ENCODE measurements at regions of chr10 and their contacts with region 1.

Region 1: GRCh38 chr10:72567884-72568640 is 57.8 kb downstream of the MICU1 start:
- DNase-seq: no peak
- ATAC-seq: no peak
- H3K4me3 Mint-ChIP-seq: no peak overlapping the region
- H3K27ac Mint-ChIP-seq: no peak overlapping the region
- H3K4me1 Mint-ChIP-seq: peaks cover 17% of the 10 kb centered on the region
- H3K27me3 Mint-ChIP-seq: no peaks in the 10 kb centered on the region

Region 2: DNA sequence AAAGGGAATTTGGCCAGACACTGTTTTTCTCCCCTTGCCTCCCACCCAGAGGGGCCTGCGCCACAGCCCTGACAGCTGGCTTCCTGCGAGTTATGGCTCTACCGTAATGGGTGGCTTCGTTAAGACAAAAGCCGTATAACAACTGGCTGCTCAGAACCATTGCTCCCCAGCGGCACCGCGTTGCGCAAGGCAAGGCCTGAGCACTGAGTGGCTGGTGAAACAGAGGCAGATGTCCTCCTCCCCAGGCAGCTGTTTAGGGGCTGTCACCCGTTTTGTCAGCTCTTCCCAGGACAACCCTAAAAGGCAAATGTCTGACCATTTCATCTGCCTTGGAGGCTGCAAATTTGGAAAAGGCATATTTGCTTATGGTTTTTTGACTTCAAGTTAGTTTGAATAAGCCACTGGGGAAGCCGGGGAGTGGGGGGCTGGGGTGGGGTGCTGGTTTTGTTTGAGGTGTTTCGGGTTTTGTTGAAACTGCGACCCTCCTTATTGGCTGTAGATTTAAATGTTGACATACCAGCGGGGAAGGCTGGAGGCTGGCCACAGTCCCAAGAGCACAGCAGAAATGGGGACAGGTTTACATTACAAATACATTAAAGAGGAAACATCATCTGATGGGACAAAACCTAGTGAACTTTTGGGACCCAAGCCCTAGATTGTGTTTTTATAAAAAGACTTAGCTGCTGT is 479.0 kb before region 1 on chr10:
- CTCF ChIA-PET with region 1: no interaction called
- POLR2A ChIA-PET with region 1: no interaction called
- intact Hi-C with region 1: loop called in 1 of 2 experiments (anchors 2 kb)
- DNase-seq: peak; percentile 79
- ATAC-seq: peak; percentile 50
- H3K4me3 Mint-ChIP-seq: peak overlapping the region; percentile 98
- H3K27ac Mint-ChIP-seq: peak overlapping the region; percentile 100
- H3K4me1 Mint-ChIP-seq: peaks cover 57% of the 10 kb centered on the region
- H3K27me3 Mint-ChIP-seq: no peaks in the 10 kb centered on the region

Region 3: GRCh38 chr10:72162978-72163377 is 405.1 kb before region 1 on chr10:
- CTCF ChIA-PET with region 1: no interaction called
- POLR2A ChIA-PET with region 1: no interaction called
- intact Hi-C with region 1: loop called in 1 of 2 experiments (anchors 5 kb)
- DNase-seq: peak; percentile 25
- ATAC-seq: peak; percentile 94
- H3K4me3 Mint-ChIP-seq: no peak overlapping the region
- H3K27ac Mint-ChIP-seq: peak overlapping the region; percentile 85
- H3K4me1 Mint-ChIP-seq: peaks cover 35% of the 10 kb centered on the region
- H3K27me3 Mint-ChIP-seq: no peaks in the 10 kb centered on the region

Region 4: DNA sequence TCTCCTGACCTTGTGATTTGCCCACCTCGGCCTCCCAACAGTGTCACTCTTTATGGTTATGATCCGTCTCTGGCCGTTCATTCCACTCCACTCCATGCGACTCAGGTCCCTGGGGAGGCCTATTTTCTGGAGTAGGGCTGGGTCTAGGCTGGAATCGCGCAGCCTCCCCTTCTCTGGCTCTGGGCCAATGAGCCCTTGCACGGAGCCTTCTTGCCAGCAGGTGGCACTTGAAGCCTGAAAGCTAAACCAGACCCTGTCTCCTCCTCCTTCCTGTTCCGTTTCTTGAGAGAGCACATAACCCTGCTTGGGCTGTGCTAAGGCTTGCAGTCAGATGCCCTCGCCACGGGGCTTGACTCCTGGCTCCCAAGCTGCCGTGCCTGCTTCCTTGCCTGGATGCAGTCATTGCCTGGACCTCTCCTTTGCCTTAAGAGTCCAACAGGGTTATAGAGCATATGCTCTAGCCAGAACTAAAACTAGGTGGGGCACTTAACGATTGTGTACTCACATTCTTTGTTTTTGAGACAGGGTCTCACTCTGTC is 203.8 kb before region 1 on chr10:
- CTCF ChIA-PET with region 1: interaction called, 3 read pairs
- POLR2A ChIA-PET with region 1: no interaction called
- intact Hi-C with region 1: loop called (anchors 2 to 5 kb)
- DNase-seq: peak; percentile 92
- ATAC-seq: peak; percentile 99
- H3K4me3 Mint-ChIP-seq: no peak overlapping the region
- H3K27ac Mint-ChIP-seq: peak overlapping the region; percentile 68
- H3K4me1 Mint-ChIP-seq: peaks cover 13% of the 10 kb centered on the region
- H3K27me3 Mint-ChIP-seq: no peaks in the 10 kb centered on the region

Region 5: GRCh38 chr10:72625608-72626443 is 57.8 kb after region 1 on chr10 and contains the start of gene MICU1:
- CTCF ChIA-PET with region 1: interaction called, 5 read pairs
- POLR2A ChIA-PET with region 1: interaction called, 7 read pairs
- intact Hi-C with region 1: loop called (anchors 1 kb)
- DNase-seq: peak; percentile 98
- ATAC-seq: peak; percentile 99
- H3K4me3 Mint-ChIP-seq: peak within 1 kb of the TSS; percentile 94
- H3K27ac Mint-ChIP-seq: peak within 1 kb of the TSS; percentile 91
- H3K4me1 Mint-ChIP-seq: peaks cover 7% of the 10 kb centered on the region
- H3K27me3 Mint-ChIP-seq: no peaks in the 10 kb centered on the region
- total RNA-seq, gene MICU1: 41.0 to 51.5 TPM

Region 6: GRCh38 chr10:72679838-72680241 is 111.8 kb after region 1 on chr10:
- CTCF ChIA-PET with region 1: no interaction called
- POLR2A ChIA-PET with region 1: no interaction called
- intact Hi-C with region 1: loop called in 1 of 2 experiments (anchors 5 kb)
- DNase-seq: no peak
- ATAC-seq: no peak
- H3K4me3 Mint-ChIP-seq: no peak overlapping the region
- H3K27ac Mint-ChIP-seq: no peak overlapping the region
- H3K4me1 Mint-ChIP-seq: peaks cover 12% of the 10 kb centered on the region
- H3K27me3 Mint-ChIP-seq: peaks cover 3% of the 10 kb centered on the region

Region 7: DNA sequence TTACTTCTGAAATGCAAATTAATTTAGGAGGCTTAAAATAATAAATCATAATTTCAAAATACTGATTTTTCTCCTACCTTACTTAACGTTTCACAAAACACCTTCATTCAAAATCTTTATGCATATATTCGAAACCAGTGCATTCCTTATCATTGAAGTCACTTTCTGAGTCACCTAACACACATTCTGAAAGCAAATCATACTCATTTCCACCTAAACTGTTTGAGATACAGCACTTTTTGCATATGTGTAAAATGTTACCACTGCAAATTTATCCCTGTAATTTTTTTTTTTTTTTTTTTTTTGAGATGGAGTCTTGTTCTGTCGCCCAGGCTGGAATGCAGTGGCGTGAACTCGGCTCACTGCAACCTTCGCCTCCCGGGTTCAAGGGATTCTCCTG is 912.1 kb after region 1 on chr10:
- CTCF ChIA-PET with region 1: no interaction called
- POLR2A ChIA-PET with region 1: no interaction called
- intact Hi-C with region 1: loop called in 1 of 2 experiments (anchors 5 kb)
- DNase-seq: no peak
- ATAC-seq: peak; percentile 81
- H3K4me3 Mint-ChIP-seq: no peak overlapping the region
- H3K27ac Mint-ChIP-seq: no peak overlapping the region
- H3K4me1 Mint-ChIP-seq: peaks cover 31% of the 10 kb centered on the region
- H3K27me3 Mint-ChIP-seq: no peaks in the 10 kb centered on the region